ENCODE measurements at regions of chr4 and their contacts with region 1.

Region 1: DNA sequence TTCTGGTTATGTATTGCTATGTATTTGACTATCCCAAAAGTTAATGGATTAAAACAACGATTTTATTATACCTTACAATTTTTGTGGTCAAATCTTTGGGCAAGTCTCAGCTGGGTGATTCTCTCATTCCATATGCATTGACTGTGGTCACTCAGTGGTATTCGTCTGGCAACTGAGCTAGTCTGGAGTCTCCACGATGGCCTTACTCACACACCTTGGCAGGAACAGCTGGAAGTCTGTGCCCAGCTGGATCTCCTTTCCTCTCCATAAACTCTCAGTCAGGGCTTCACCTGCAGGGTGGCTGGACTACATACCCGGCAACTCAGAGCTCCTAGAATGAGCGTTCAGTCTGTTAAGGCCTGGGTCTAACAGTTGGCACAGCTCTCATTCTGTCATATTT is 141.1 kb upstream of the WDFY3 start:
- DNase-seq: no peak
- H3K4me3 ChIP-seq: no peak overlapping the region
- H3K27ac ChIP-seq: no peak overlapping the region
- H3K4me1 ChIP-seq: no peaks in the 10 kb centered on the region
- H3K27me3 ChIP-seq: no peaks in the 10 kb centered on the region
- CTCF ChIP-seq: no peak

Region 2: DNA sequence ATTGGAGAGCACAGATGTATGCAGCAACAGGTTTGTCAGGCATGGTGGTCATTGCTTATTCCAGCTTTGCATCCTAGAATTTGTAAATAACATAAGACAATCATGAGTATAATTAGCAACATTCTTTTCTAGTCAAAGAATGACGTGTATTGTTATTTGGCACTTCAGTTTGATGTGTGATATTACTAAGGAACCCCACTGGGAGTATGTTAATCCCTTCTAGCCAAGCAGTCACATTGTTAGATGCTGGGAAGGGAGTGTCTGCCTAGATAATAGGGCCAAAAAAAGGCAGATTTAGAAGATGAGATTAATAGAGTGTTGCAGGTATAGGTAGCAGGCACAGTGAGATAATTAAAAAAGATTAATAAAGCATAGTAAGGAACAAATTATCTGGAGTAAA is 18.1 kb after region 1 on chr4:
- CTCF ChIA-PET with region 1: no interaction called
- POLR2A ChIA-PET with region 1: interaction called, 11 read pairs
- intact Hi-C with region 1: no loop called
- DNase-seq: no peak
- H3K4me3 ChIP-seq: no peak overlapping the region
- H3K27ac ChIP-seq: no peak overlapping the region
- H3K4me1 ChIP-seq: no peaks in the 10 kb centered on the region
- H3K27me3 ChIP-seq: no peaks in the 10 kb centered on the region
- CTCF ChIP-seq: no peak